ENCODE measurements at regions of chr9 and their contacts with region 1.

Region 1: DNA sequence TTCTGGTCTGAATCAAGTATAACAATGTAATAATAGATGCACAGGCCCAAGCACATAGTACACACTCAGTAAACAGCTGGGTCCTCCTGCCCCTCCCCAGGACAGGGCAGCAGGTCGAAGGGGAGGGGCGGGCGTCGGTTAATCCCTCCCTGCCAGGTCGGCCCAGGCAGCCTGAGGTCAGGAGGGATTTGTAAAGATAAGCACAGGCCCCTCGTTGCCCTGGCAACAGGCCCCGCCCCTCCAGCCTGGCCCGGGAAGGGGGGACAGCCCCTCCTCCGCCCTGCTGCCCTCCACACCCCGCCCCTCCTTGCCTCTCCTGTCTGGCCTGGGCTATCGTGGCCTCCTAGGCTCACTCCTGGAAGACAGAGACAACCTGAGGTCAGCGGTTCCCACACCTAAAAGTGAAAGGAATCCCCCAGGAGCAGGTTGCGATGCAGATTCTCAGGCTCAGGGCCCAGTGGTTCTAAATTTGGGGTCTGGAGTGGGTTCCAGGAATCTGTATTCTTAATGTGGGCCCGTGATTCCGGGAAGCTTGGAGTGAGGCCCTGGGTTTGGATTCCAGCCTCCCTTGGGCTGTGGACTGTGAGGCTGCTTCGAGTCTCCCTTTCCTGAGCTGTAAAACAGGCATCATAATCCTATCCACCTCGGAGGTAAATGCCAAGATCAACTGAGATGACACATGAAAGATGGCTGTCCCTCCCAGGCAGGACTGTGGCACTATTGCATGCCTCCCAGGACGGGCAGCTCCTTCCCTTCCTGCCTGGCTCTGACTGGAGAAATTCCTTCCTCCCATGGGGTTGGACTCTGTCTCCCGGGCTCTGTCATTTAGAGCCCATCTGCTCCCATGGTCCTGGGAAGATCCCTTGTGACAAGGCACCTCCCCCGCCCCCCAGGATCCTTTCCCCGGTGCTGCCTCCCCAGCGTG is 4.4 kb downstream of the CRB2 start:
- DNase-seq: no peak
- H3K4me3 ChIP-seq: no peak overlapping the region
- H3K27ac ChIP-seq: no peak overlapping the region
- H3K4me1 ChIP-seq: no peaks in the 10 kb centered on the region
- H3K27me3 ChIP-seq: no peaks in the 10 kb centered on the region
- CTCF ChIP-seq: no peak
- POLR2A ChIP-seq: no peak

Region 2: GRCh38 chr9:122029898-122030297 is 1330.5 kb before region 1 on chr9:
- intact Hi-C with region 1: loop called (anchors 10 kb)
- DNase-seq: no peak
- H3K4me3 ChIP-seq: no peak overlapping the region
- H3K27ac ChIP-seq: no peak overlapping the region
- H3K4me1 ChIP-seq: no peaks in the 10 kb centered on the region
- H3K27me3 ChIP-seq: no peaks in the 10 kb centered on the region
- CTCF ChIP-seq: no peak
- POLR2A ChIP-seq: no peak

Region 3: GRCh38 chr9:123377211-123377971 is 17.0 kb after region 1 on chr9:
- intact Hi-C with region 1: no loop called
- DNase-seq: no peak
- H3K4me3 ChIP-seq: no peak overlapping the region
- H3K27ac ChIP-seq: no peak overlapping the region
- H3K4me1 ChIP-seq: no peaks in the 10 kb centered on the region
- H3K27me3 ChIP-seq: peaks cover 4 to 29% of the 10 kb centered on the region in 2 donors
- CTCF ChIP-seq: no peak
- POLR2A ChIP-seq: no peak

Region 4: GRCh38 chr9:123511326-123512277 is 151.2 kb after region 1 on chr9:
- intact Hi-C with region 1: no loop called
- DNase-seq: no peak
- H3K4me3 ChIP-seq: no peak overlapping the region
- H3K27ac ChIP-seq: no peak overlapping the region
- H3K4me1 ChIP-seq: no peaks in the 10 kb centered on the region
- H3K27me3 ChIP-seq: no peaks in the 10 kb centered on the region
- CTCF ChIP-seq: no peak
- POLR2A ChIP-seq: no peak